PC-3 (cell line): ENCODE measurements at regions of chr2 and their contacts with region 1.

Region 1: GRCh38 chr2:43024515-43025011 is 201.8 kb downstream of the ZFP36L2 start:
- DNase-seq: peak; percentile 69
- ATAC-seq: peak; percentile 85
- H3K4me3 ChIP-seq: no peak overlapping the region
- H3K27ac ChIP-seq: no peak overlapping the region
- H3K4me1 ChIP-seq: 0 out of 2 replicates have a peak, but pooled peaks cover 3% of the 10 kb centered on the region
- H3K27me3 ChIP-seq: no peaks in the 10 kb centered on the region
- CTCF ChIP-seq: peak; percentile 77

Region 2: GRCh38 chr2:42974721-42975717 is 49.5 kb before region 1 on chr2:
- CTCF ChIA-PET with region 1: no interaction called
- POLR2A ChIA-PET with region 1: no interaction called
- intact Hi-C with region 1: loop called (anchors 5 kb)
- DNase-seq: peak; percentile 66
- ATAC-seq: peak; percentile 88
- H3K4me3 ChIP-seq: peak overlapping the region; percentile 69
- H3K27ac ChIP-seq: peak overlapping the region; percentile 32; the same call in 1 of the 2 replicates
- H3K4me1 ChIP-seq: peaks cover 19% of the 10 kb centered on the region
- H3K27me3 ChIP-seq: no peaks in the 10 kb centered on the region
- CTCF ChIP-seq: peak; percentile 88

Region 3: DNA sequence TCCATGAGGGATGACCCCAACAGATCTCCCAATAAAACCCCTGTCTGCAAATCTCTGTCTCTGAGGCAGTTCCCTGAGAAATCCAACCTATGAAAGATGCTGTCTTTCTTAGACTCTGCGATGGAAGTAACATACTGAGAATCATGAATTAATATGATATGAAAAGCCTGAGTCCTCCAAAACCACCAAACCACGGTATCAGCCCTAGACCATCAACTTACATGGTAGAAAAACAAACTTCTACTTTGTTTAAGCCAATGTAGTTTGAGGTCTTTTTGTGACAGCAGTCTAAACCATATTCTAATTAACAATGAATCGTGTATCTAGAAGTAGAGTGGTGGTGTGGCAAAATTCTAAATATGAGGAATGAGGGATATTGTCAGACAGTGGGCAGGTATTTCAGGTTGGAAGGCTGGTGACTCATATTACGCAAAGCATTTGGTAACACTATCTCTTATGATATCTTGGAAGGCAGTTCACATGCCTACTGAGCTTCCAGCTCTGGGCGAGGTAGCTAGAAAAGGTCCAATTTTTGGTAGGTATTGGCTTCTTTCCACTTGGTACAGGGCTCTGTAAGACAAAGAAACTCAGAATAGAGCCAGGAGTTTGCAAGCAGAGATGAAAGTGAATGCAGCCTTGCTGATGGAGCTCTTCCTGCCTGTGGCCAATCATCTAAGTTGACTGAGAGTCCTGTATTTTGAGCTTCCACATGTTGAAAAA is 14.0 kb before region 1 on chr2:
- CTCF ChIA-PET with region 1: interaction called, 14 read pairs
- POLR2A ChIA-PET with region 1: no interaction called
- intact Hi-C with region 1: no loop called
- DNase-seq: peak; percentile 90
- ATAC-seq: peak; percentile 91
- H3K4me3 ChIP-seq: no peak overlapping the region
- H3K27ac ChIP-seq: peak overlapping the region; percentile 69
- H3K4me1 ChIP-seq: peaks cover 16% of the 10 kb centered on the region
- H3K27me3 ChIP-seq: no peaks in the 10 kb centered on the region
- CTCF ChIP-seq: no peak